Transverse colon (tissue), 4 donors: ENCODE measurements at regions of chr6 and their contacts with region 1.

Region 1: DNA sequence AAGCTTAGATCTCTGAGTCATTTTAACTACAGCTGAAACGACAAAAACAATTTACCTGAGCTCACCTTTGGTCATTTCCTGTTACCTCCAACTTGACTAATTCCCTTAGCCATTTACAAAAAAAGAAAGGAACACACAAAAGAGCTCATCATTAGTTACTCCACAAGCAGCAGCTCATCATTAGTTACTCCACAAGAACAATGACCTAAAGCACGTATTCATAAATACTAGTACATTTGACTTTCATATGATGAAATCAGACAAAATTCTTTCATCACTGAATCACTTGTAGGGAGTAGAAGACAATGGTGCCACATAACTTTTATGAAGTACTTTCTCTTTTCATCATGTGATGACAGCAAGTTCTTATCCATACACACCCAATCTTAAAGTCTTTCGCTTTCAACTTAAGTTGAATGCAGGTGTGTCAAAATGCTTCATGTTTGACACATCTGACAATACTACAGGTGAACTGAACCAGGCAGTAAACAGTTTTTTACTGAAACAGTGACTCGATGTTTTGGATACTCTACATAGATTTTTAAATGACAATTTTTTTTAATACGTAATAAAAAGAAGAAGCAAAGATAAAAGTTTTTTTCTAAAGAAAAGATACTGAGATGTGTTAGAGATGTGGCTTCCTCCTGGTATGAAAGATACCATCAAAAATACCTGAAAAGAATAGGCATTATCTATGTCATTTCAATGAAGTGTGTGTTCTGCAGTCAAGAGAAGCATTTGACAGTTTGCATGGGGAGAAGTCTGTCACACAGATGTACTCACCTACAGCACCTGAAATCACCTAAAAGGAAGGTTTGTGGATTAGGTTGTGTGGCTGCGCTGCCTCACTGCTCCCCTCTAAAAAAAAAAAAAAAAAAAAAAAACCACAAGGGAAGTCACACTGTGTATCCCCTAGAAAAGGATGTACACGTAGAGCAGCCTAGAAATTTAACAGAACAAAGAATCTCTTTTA is 109.1 kb downstream of the PRDM1 start:
- DNase-seq: no peak
- H3K4me3 ChIP-seq: no peak overlapping the region
- H3K27ac ChIP-seq: peak overlapping the region in 2 of 4 donors; percentile 13 to 38
- H3K4me1 ChIP-seq: peaks cover 0 to 8% (median 3%) of the 10 kb centered on the region in 4 donors
- H3K27me3 ChIP-seq: no peaks in the 10 kb centered on the region
- CTCF ChIP-seq: no peak
- EP300 ChIP-seq: no peak
- POLR2A ChIP-seq: no peak

Region 2: DNA sequence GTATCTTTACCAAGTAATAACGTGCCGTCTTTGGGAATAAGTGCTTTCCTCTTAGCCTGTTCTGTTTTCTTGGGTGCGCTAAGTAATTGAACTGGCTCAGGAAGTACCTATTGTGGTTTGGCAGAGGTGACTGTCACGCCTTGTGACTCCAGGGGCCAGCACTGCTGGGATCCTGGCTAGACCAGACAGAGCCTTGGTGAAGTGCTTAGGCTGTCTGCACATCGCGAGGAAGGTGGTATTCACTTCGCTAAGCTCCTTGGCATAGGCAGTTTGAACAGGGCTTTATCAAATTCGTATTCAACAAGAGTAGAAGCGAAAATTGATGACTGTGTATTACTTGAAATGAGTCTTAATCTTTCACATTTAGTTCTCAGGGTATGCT is 91.5 kb before region 1 on chr6:
- in situ Hi-C with region 1: loop called in 1 of 4 experiments (anchors 10 kb)
- intact Hi-C with region 1: no loop called
- DNase-seq: peak; percentile 57
- H3K4me3 ChIP-seq: peak overlapping the region in 2 of 4 donors; percentile 13 to 25
- H3K27ac ChIP-seq: peak overlapping the region; percentile 25 to 88 (median 50)
- H3K4me1 ChIP-seq: peaks cover 0 to 28% (median 10%) of the 10 kb centered on the region in 4 donors
- H3K27me3 ChIP-seq: no peaks in the 10 kb centered on the region
- CTCF ChIP-seq: no peak
- EP300 ChIP-seq: no peak
- POLR2A ChIP-seq: no peak